ENCODE measurements at regions of chr17 and their contacts with region 1.

Region 1: GRCh38 chr17:76014184-76014924 is 12.8 kb downstream of the EVPL start:
- DNase-seq: peak; percentile 92
- ATAC-seq: peak; percentile 94
- H3K4me3 Mint-ChIP-seq: no peak overlapping the region
- H3K27ac Mint-ChIP-seq: no peak overlapping the region
- H3K4me1 Mint-ChIP-seq: 0 out of 2 replicates have a peak, but pooled peaks cover 2% of the 10 kb centered on the region
- H3K27me3 Mint-ChIP-seq: no peaks in the 10 kb centered on the region
- CTCF ChIP-seq: peak; percentile 98

Region 2: GRCh38 chr17:75707131-75707571 is 307.2 kb before region 1 on chr17:
- CTCF ChIA-PET with region 1: no interaction called
- POLR2A ChIA-PET with region 1: no interaction called
- DNase-seq: no peak
- ATAC-seq: no peak
- H3K4me3 Mint-ChIP-seq: no peak overlapping the region
- H3K27ac Mint-ChIP-seq: peak overlapping the region; percentile 11; the same call in 1 of the 2 replicates
- H3K4me1 Mint-ChIP-seq: no peaks in the 10 kb centered on the region
- H3K27me3 Mint-ChIP-seq: no peaks in the 10 kb centered on the region
- CTCF ChIP-seq: no peak

Region 3: GRCh38 chr17:75904749-75905521 is 109.4 kb before region 1 on chr17 and contains the start of gene MRPL38:
- CTCF ChIA-PET with region 1: interaction called, 21 read pairs
- POLR2A ChIA-PET with region 1: interaction called, 4 read pairs
- DNase-seq: peak; percentile 96
- ATAC-seq: peak; percentile 98
- H3K4me3 Mint-ChIP-seq: peak within 1 kb of the TSS; percentile 98
- H3K27ac Mint-ChIP-seq: peak within 1 kb of the TSS; percentile 95
- H3K4me1 Mint-ChIP-seq: peaks cover 3% of the 10 kb centered on the region; the same call in 1 of the 2 replicates
- H3K27me3 Mint-ChIP-seq: no peaks in the 10 kb centered on the region
- CTCF ChIP-seq: peak; percentile 97
- total RNA-seq, gene MRPL38: 107 to 146 TPM (median 116 TPM) in 3 replicates

Region 4: GRCh38 chr17:76000016-76000754 is 14.2 kb before region 1 on chr17:
- CTCF ChIA-PET with region 1: interaction called, 112 read pairs
- POLR2A ChIA-PET with region 1: no interaction called
- DNase-seq: peak; percentile 90
- ATAC-seq: peak; percentile 92
- H3K4me3 Mint-ChIP-seq: no peak overlapping the region
- H3K27ac Mint-ChIP-seq: no peak overlapping the region; the same call in 1 of the 2 replicates
- H3K4me1 Mint-ChIP-seq: peaks cover 14% of the 10 kb centered on the region
- H3K27me3 Mint-ChIP-seq: no peaks in the 10 kb centered on the region
- CTCF ChIP-seq: peak; percentile 81

Region 5: GRCh38 chr17:76053246-76054116 is 39.1 kb after region 1 on chr17:
- CTCF ChIA-PET with region 1: interaction called, 17 read pairs
- POLR2A ChIA-PET with region 1: no interaction called
- DNase-seq: no peak
- ATAC-seq: no peak
- H3K4me3 Mint-ChIP-seq: no peak overlapping the region
- H3K27ac Mint-ChIP-seq: peak overlapping the region; percentile 33
- H3K4me1 Mint-ChIP-seq: peaks cover 4% of the 10 kb centered on the region
- H3K27me3 Mint-ChIP-seq: no peaks in the 10 kb centered on the region
- CTCF ChIP-seq: no peak

Region 6: GRCh38 chr17:76121932-76122430 is 107.6 kb after region 1 on chr17:
- CTCF ChIA-PET with region 1: interaction called, 13 read pairs
- POLR2A ChIA-PET with region 1: interaction called, 5 read pairs
- DNase-seq: peak; percentile 54
- ATAC-seq: peak; percentile 5; the same call in 1 of the 2 replicates
- H3K4me3 Mint-ChIP-seq: no peak overlapping the region; the same call in 1 of the 2 replicates
- H3K27ac Mint-ChIP-seq: peak overlapping the region; percentile 19; the same call in 1 of the 2 replicates
- H3K4me1 Mint-ChIP-seq: peaks cover 39% of the 10 kb centered on the region
- H3K27me3 Mint-ChIP-seq: no peaks in the 10 kb centered on the region; the same call in none of the 2 replicates
- CTCF ChIP-seq: no peak

Region 7: DNA sequence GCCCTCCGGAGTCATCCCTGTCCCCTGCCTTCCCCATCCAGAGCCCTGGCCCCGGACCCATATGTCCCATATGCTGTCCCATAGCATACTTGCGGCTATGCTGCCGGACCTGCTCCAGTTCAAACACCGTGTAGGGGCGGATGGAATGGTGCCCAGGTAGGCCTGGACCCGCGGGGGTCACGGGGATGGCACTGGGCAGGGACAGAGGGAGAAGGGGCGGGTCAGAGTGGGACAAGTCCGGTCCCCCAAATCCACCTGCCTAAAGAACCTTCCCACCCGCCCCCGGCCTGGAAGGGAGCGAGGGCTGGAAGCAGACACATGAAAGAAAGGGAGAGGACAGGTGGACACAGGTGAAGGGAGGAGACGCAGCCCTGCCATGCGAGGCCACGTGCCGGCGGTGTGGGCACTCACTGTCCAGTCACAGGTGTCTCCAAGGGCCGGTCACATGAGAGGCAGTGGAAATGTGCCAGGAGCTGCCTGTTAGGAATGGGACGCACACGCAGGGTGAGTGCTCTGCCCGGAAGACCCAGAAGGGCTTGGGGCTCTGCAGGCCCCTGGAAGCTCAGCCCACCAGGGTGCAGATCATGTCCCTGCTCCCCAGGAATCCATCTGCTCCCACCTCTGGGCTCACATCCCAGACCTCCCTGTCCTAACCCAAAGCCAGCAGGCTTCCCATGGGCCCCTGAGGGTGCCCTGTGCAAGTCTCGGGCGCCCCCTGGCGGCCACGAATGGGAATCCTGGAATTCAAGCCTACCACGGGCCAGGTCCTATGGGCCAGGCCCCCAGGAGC is 264.8 kb after region 1 on chr17:
- CTCF ChIA-PET with region 1: interaction called, 57 read pairs
- POLR2A ChIA-PET with region 1: no interaction called
- DNase-seq: peak; percentile 94
- ATAC-seq: peak; percentile 93
- H3K4me3 Mint-ChIP-seq: no peak overlapping the region
- H3K27ac Mint-ChIP-seq: no peak overlapping the region
- H3K4me1 Mint-ChIP-seq: no peaks in the 10 kb centered on the region
- H3K27me3 Mint-ChIP-seq: no peaks in the 10 kb centered on the region
- CTCF ChIP-seq: peak; percentile 96

Measured in WTC11 (cell line).